ENCODE measurements at regions of chr17 and their contacts with region 1.

Region 1: GRCh38 chr17:29777663-29778062 is 152.4 kb downstream of the SSH2 start:
- DNase-seq: no peak
- H3K4me3 ChIP-seq: no peak overlapping the region
- H3K27ac ChIP-seq: peak overlapping the region; percentile 71
- H3K4me1 ChIP-seq: peaks cover 44% of the 10 kb centered on the region
- H3K27me3 ChIP-seq: no peaks in the 10 kb centered on the region
- CTCF ChIP-seq: no peak

Region 2: DNA sequence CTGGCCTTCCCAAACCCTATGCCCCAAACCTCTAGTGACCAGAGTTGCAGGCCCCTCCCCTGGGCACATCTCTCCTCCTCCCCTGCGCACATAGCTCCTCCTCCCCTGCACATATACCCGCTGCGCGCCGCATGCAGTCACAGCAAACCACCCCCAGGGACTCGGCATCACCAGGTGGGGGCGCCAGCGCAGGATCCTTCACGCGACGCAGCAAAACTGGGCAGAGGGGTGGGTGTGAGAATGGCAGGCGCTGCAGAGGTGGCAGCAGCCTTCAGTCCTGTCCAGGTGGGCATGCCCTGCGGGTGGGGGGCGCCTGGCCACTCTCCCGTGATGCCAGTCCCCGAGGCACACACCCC is 160.6 kb before region 1 on chr17:
- CTCF ChIA-PET with region 1: interaction called, 9 read pairs
- POLR2A ChIA-PET with region 1: interaction called, 24 read pairs
- intact Hi-C with region 1: no loop called
- DNase-seq: peak; percentile 93
- H3K4me3 ChIP-seq: no peak overlapping the region
- H3K27ac ChIP-seq: no peak overlapping the region
- H3K4me1 ChIP-seq: peaks cover 47% of the 10 kb centered on the region
- H3K27me3 ChIP-seq: no peaks in the 10 kb centered on the region
- CTCF ChIP-seq: peak; percentile 96

Region 3: DNA sequence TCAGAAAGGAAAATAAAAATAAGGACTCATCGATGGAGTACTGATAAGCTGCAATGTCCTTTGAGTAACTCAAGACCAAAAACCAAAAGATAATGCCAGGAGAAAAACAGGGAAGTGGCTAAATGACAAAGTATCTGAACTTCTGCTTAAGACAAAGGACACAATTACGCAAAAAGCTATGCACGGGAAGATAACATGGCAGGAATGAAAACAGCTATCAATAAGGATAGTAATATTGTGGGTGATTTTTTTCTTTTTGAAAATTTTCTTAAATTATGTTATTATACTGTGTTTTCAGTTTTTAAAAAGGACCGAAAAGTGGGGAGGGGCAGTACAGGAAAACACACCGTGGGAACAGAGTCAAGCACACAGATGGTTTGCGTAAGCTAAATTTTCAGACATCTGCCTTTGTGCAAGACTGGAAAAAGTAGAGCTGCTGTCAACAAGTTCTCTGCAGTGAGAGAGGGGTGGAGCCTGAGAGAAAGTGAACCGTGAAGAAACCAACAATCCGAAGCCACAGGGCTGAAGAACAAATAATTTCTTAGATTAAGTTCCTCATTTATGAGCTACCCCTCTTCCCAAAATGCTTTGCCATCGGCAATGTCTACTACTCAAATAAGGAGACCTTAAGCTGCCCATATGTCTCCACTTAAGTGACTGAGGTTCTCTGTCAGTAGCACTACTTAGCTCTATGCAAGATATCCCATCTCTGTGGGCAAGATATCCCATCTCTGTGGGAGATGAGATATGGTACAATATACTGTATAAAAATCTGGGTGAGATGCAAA is 55.1 kb before region 1 on chr17:
- CTCF ChIA-PET with region 1: interaction called, 8 read pairs
- POLR2A ChIA-PET with region 1: interaction called, 18 read pairs
- intact Hi-C with region 1: loop called (anchors 2 kb)
- DNase-seq: peak; percentile 87
- H3K4me3 ChIP-seq: peak overlapping the region; percentile 26
- H3K27ac ChIP-seq: peak overlapping the region; percentile 90
- H3K4me1 ChIP-seq: peaks cover 76% of the 10 kb centered on the region
- H3K27me3 ChIP-seq: no peaks in the 10 kb centered on the region
- CTCF ChIP-seq: no peak

Region 4: GRCh38 chr17:29760761-29761696 is 16.6 kb before region 1 on chr17:
- CTCF ChIA-PET with region 1: interaction called, 4 read pairs
- POLR2A ChIA-PET with region 1: no interaction called
- intact Hi-C with region 1: loop called (anchors 2 kb)
- DNase-seq: peak; percentile 95
- H3K4me3 ChIP-seq: peak overlapping the region; percentile 79
- H3K27ac ChIP-seq: peak overlapping the region; percentile 76
- H3K4me1 ChIP-seq: peaks cover 46% of the 10 kb centered on the region
- H3K27me3 ChIP-seq: no peaks in the 10 kb centered on the region
- CTCF ChIP-seq: no peak

Region 5: DNA sequence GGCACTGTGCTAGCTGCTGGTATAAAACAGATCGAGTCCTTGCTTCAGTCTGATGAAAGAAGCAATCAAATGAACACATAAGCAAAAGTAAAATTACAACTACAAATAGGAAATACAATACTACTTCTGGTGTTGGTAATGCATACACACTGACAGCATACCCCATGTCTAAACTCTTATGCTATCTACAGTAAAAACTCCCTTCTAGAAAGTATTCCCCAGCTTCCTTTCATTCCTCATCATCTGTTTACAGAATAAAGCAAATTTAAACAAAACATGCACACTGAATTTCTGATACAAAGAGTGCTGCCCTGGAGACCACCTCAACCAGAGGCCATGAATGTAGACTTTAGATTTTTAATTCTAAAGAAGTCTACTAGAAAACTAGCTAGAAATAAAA is 42.8 kb after region 1 on chr17:
- CTCF ChIA-PET with region 1: no interaction called
- POLR2A ChIA-PET with region 1: no interaction called
- intact Hi-C with region 1: no loop called
- DNase-seq: no peak
- H3K4me3 ChIP-seq: no peak overlapping the region
- H3K27ac ChIP-seq: no peak overlapping the region
- H3K4me1 ChIP-seq: no peaks in the 10 kb centered on the region
- H3K27me3 ChIP-seq: no peaks in the 10 kb centered on the region
- CTCF ChIP-seq: no peak

Region 6: GRCh38 chr17:30041551-30041950 is 263.9 kb after region 1 on chr17:
- CTCF ChIA-PET with region 1: no interaction called
- POLR2A ChIA-PET with region 1: interaction called, 15 read pairs
- intact Hi-C with region 1: no loop called
- DNase-seq: no peak
- H3K4me3 ChIP-seq: no peak overlapping the region
- H3K27ac ChIP-seq: peak overlapping the region; percentile 89
- H3K4me1 ChIP-seq: peaks cover 21% of the 10 kb centered on the region
- H3K27me3 ChIP-seq: no peaks in the 10 kb centered on the region
- CTCF ChIP-seq: no peak